ENCODE measurements at regions of chr15 and their contacts with region 1.

Region 1: GRCh38 chr15:33700695-33701304 is 267.5 kb upstream of the CHRM5 start:
- H3K4me3 Mint-ChIP-seq: no peak overlapping the region
- H3K27ac Mint-ChIP-seq: no peak overlapping the region
- H3K4me1 Mint-ChIP-seq: peaks cover 8% of the 10 kb centered on the region
- H3K27me3 Mint-ChIP-seq: peaks cover 3% of the 10 kb centered on the region

Region 2: GRCh38 chr15:32802286-32802936 is 898.4 kb before region 1 on chr15:
- intact Hi-C with region 1: no loop called
- H3K4me3 Mint-ChIP-seq: no peak overlapping the region
- H3K27ac Mint-ChIP-seq: no peak overlapping the region
- H3K4me1 Mint-ChIP-seq: no peaks in the 10 kb centered on the region
- H3K27me3 Mint-ChIP-seq: peaks cover 5% of the 10 kb centered on the region

Region 3: DNA sequence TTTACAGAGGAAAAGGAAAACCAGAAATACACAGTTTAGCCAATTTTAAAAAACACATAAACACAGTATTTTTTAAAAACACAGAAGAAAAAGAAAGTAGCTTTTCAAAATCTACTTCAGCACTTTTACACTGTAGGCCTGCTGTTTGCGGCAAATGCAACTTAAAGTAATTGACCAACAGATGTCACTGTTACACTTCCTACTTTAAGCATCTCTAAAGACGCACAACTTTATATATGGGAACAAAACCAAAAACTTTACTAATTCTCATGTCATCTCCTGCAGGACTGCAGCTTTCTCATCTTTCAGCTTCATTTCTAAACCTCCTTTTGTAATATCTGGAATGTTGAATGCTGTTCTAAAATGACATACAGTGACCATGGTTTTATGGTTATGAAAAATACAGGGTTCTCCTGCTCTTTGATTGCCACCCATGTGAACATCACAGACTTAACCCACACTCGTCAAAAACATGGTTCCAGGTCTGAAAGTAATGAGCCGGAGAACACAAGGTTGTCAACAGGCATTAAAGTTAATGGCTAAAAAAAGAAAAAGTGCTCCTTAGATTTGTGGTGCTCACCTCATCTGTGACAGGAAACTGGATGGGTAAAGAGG is 614.2 kb before region 1 on chr15:
- intact Hi-C with region 1: loop called (anchors 2 kb)
- H3K4me3 Mint-ChIP-seq: no peak overlapping the region
- H3K27ac Mint-ChIP-seq: no peak overlapping the region
- H3K4me1 Mint-ChIP-seq: peaks cover 6% of the 10 kb centered on the region
- H3K27me3 Mint-ChIP-seq: no peaks in the 10 kb centered on the region

Region 4: DNA sequence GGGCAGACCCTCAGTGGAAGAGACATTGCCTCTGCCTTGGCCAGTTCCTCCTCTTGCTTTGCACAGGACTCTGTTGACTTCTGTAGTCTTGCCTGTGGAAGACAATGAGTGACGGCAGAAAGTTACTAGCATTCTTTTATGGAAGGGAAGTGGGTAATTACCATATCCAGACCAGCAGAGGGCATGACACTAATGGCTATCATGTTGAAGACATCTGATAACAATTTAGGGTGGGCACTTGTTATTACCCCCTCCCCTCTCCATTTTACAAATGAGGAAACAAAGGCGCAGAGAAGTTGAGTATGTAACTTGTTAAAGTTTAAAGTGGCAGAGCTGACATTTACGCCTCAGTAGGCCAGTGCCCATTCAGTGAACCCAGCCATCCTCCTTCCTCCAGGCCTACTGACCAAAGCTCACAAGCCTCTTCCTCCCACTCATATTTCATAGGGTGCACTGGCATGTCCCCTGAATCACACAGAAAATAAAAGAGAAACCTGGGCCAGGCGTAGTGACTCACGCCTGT is 458.1 kb before region 1 on chr15:
- intact Hi-C with region 1: loop called (anchors 5 kb)
- H3K4me3 Mint-ChIP-seq: no peak overlapping the region
- H3K27ac Mint-ChIP-seq: no peak overlapping the region
- H3K4me1 Mint-ChIP-seq: no peaks in the 10 kb centered on the region
- H3K27me3 Mint-ChIP-seq: peaks cover 16% of the 10 kb centered on the region

Region 5: GRCh38 chr15:33292717-33293307 is 408.0 kb before region 1 on chr15:
- intact Hi-C with region 1: loop called (anchors 1 kb)
- H3K4me3 Mint-ChIP-seq: no peak overlapping the region
- H3K27ac Mint-ChIP-seq: no peak overlapping the region
- H3K4me1 Mint-ChIP-seq: no peaks in the 10 kb centered on the region
- H3K27me3 Mint-ChIP-seq: peaks cover 2% of the 10 kb centered on the region

Region 6: DNA sequence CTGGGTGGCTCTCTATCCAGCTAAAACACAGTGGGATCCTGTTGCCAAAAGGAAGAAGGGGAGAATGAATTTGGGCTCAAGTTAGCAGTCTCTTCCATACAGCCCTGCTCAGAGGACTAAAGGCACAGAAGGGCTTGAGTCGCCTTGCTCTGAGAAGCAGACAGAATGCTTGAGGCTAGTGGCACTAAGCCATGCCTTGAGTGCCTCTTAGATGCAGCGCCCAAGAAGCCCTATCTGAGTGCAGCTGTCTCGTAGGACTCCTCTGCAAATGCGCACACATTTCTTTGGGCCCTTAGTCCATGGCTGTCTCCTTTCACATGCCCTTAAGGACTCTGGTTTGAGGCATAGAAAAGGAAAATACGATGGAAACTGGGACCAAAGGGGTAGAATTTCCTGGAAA is 56.2 kb after region 1 on chr15:
- intact Hi-C with region 1: no loop called
- H3K4me3 Mint-ChIP-seq: no peak overlapping the region
- H3K27ac Mint-ChIP-seq: no peak overlapping the region
- H3K4me1 Mint-ChIP-seq: peaks cover 18% of the 10 kb centered on the region
- H3K27me3 Mint-ChIP-seq: peaks cover 5% of the 10 kb centered on the region

Region 7: DNA sequence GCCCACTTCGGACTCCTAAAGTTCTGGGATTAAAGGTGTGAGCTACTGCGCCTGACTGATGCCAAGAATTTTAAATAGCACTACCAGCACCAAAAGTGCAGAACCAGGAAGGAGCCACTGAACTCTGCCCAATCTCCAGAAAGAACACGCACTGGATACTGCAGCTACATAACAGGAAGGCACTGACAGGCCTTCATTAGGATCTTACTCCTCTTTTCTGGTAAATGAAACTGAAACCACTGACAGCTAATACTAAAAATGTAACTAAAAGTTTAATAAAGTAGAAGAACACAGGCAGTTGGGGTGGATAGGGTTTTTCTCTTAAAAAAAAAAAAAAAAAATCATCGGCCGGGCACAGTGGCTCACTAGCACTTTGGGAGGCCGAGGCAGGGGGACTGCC is 193.4 kb after region 1 on chr15:
- intact Hi-C with region 1: no loop called
- H3K4me3 Mint-ChIP-seq: no peak overlapping the region
- H3K27ac Mint-ChIP-seq: no peak overlapping the region
- H3K4me1 Mint-ChIP-seq: no peaks in the 10 kb centered on the region
- H3K27me3 Mint-ChIP-seq: no peaks in the 10 kb centered on the region

Measured in dendritic cell treated with granulocyte-macrophage colony-stimulating factor and Interleukin-4, amounts not matched to agents 40 ng/mL and 50 ng/mL, for 4 days (primary cell).